B cell (primary cell): ENCODE measurements at regions of chr5 and their contacts with region 1.

Region 1: DNA sequence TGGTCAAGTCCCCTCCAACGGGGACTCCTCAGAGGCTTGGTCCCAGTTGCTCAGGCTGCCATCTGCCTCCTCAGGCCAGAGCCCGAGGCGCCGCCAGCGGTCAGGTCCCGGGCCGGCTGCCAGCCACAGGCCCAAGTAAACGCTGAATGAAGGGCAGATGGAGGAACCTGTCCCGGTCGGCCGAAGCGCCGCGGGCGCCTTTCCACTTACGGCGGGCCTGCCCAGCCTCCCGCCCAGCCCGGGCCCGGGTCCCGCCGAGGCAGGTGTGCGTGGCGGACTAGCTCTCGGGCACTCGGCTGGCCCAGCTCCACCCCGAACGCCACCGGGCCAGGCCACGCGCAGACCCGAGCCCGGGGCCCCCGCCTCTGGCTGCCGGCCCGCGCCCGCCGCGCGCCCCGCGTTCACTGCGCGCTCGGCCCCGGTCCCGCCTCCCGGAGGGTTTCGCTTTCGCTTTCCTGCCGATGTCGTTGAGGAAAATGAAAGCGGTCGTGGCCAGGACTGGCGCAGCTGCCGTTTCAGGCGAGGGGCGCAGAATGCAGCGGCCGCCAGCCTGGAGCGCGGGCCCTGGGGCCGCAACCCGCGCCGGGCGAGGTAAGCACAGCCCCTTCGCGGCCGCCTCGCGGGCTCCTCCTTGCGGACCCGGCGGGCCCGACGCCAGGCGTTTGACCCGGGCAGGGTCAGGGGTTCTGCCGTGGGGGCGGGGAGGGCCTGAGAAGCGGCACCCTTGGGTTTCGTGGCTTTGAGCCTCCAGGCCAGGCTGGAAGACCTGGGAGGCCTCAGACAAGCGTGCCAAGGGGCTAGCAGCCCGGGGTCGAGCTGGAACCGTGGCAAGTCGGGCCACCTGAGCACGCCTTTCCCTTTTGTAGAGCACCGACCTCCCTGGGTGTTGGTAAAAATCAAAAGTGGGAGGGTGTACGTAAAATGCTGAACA is 41.2 kb downstream of the SLC22A5 start:
- DNase-seq: peak; percentile 94
- ATAC-seq: peak; percentile 81
- H3K4me3 ChIP-seq: peak overlapping the region; percentile 71 to 93 (median 78)
- H3K4me3 Mint-ChIP-seq: peak overlapping the region; percentile 98
- H3K27ac ChIP-seq: peak overlapping the region; percentile 96 to 97
- H3K27ac Mint-ChIP-seq: peak overlapping the region; percentile 99
- H3K4me1 ChIP-seq: peaks cover 61 to 63% of the 10 kb centered on the region in 2 donors
- H3K4me1 Mint-ChIP-seq: peaks cover 68% of the 10 kb centered on the region
- H3K27me3 ChIP-seq: no peaks in the 10 kb centered on the region
- H3K27me3 Mint-ChIP-seq: no peaks in the 10 kb centered on the region
- CTCF ChIP-seq: peak; percentile 77

Region 2: GRCh38 chr5:131983244-131983771 is 427.4 kb before region 1 on chr5:
- CTCF ChIA-PET with region 1: no interaction called
- POLR2A ChIA-PET with region 1: no interaction called
- intact Hi-C with region 1: no loop called
- DNase-seq: no peak
- ATAC-seq: no peak
- H3K4me3 ChIP-seq: no peak overlapping the region
- H3K4me3 Mint-ChIP-seq: no peak overlapping the region
- H3K27ac ChIP-seq: no peak overlapping the region
- H3K27ac Mint-ChIP-seq: no peak overlapping the region
- H3K4me1 ChIP-seq: no peaks in the 10 kb centered on the region
- H3K4me1 Mint-ChIP-seq: no peaks in the 10 kb centered on the region
- H3K27me3 ChIP-seq: no peaks in the 10 kb centered on the region
- H3K27me3 Mint-ChIP-seq: peaks cover 8% of the 10 kb centered on the region
- CTCF ChIP-seq: no peak

Region 3: GRCh38 chr5:132426525-132427138 is 15.9 kb after region 1 on chr5:
- CTCF ChIA-PET with region 1: interaction called, 21 read pairs
- POLR2A ChIA-PET with region 1: interaction called, 8 read pairs
- intact Hi-C with region 1: loop called (anchors 2 kb)
- DNase-seq: peak; percentile 64
- ATAC-seq: peak; percentile 41
- H3K4me3 ChIP-seq: peak overlapping the region in 2 of 5 experiments; percentile 8 to 56
- H3K4me3 Mint-ChIP-seq: peak overlapping the region; percentile 80
- H3K27ac ChIP-seq: peak overlapping the region; percentile 90 to 94
- H3K27ac Mint-ChIP-seq: peak overlapping the region; percentile 93
- H3K4me1 ChIP-seq: peaks cover 99 to 100% of the 10 kb centered on the region in 2 donors
- H3K4me1 Mint-ChIP-seq: peaks cover 97% of the 10 kb centered on the region
- H3K27me3 ChIP-seq: no peaks in the 10 kb centered on the region
- H3K27me3 Mint-ChIP-seq: no peaks in the 10 kb centered on the region
- CTCF ChIP-seq: no peak

Region 4: GRCh38 chr5:132473019-132473531 is 62.4 kb after region 1 on chr5:
- CTCF ChIA-PET with region 1: interaction called, 22 read pairs
- POLR2A ChIA-PET with region 1: interaction called, 25 read pairs
- intact Hi-C with region 1: no loop called
- DNase-seq: peak; percentile 88
- ATAC-seq: peak; percentile 86
- H3K4me3 ChIP-seq: no peak overlapping the region
- H3K4me3 Mint-ChIP-seq: peak overlapping the region; percentile 83
- H3K27ac ChIP-seq: peak overlapping the region; percentile 81 to 93
- H3K27ac Mint-ChIP-seq: peak overlapping the region; percentile 99
- H3K4me1 ChIP-seq: peaks cover 46 to 75% of the 10 kb centered on the region in 2 donors
- H3K4me1 Mint-ChIP-seq: peaks cover 78% of the 10 kb centered on the region
- H3K27me3 ChIP-seq: no peaks in the 10 kb centered on the region
- H3K27me3 Mint-ChIP-seq: no peaks in the 10 kb centered on the region
- CTCF ChIP-seq: no peak

Region 5: DNA sequence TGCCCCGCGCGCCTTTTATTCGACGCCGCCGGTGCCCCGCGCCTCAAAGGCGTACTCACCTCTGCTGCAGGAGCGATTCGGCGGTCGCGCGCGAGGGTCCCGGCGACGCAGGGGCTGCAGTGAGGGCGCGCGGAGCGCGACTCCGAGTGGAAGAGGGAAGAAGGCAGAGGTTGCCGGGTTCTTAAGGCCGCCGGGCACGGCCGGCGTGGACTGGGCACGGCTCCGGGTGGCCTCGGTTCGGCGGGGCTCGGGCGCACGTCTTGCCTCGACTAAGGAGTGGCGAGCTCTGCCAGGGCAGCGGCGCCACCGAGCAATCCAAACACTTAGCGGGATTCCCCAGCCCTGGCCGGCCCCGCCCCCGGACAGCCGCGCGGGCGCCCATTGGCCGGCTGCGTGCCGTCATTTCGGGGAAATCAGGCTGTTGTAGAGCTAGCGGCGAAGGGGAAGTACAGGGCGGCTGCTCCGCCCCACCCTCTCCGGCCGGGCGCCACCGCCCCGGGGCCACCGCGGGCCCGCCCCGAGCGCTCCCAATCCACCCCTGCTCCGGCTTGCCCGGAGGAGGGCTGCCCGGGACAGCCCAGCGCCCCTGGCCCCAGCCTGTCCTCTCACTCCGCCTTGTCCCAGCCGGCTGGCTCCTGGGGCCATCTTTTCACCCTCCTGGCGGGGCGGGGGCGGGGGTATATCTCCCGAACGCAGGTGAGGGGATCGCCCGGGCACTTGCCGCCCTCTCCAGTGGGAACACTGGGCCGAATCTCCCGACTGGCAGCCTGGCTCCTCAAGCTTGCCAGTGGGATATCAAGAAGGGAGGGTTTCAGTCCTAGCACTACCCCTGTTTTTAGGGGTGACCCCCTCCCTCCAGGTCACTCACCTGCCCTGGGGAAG is 80.0 kb after region 1 on chr5 and contains the start of gene IRF1:
- CTCF ChIA-PET with region 1: interaction called, 66 read pairs
- POLR2A ChIA-PET with region 1: interaction called, 57 read pairs
- intact Hi-C with region 1: loop called (anchors 1 kb)
- DNase-seq: peak; percentile 98
- ATAC-seq: peak; percentile 70
- H3K4me3 ChIP-seq: peak within 1 kb of the TSS; percentile 81 to 99 (median 89)
- H3K4me3 Mint-ChIP-seq: peak within 1 kb of the TSS; percentile 96
- H3K27ac ChIP-seq: peak within 1 kb of the TSS; percentile 99
- H3K27ac Mint-ChIP-seq: peak within 1 kb of the TSS; percentile 96
- H3K4me1 ChIP-seq: peaks cover 74 to 81% of the 10 kb centered on the region in 2 donors
- H3K4me1 Mint-ChIP-seq: peaks cover 76% of the 10 kb centered on the region
- H3K27me3 ChIP-seq: no peaks in the 10 kb centered on the region
- H3K27me3 Mint-ChIP-seq: no peaks in the 10 kb centered on the region
- CTCF ChIP-seq: no peak
- total RNA-seq, gene IRF1: 304 and 306 TPM in 2 replicates

Region 6: DNA sequence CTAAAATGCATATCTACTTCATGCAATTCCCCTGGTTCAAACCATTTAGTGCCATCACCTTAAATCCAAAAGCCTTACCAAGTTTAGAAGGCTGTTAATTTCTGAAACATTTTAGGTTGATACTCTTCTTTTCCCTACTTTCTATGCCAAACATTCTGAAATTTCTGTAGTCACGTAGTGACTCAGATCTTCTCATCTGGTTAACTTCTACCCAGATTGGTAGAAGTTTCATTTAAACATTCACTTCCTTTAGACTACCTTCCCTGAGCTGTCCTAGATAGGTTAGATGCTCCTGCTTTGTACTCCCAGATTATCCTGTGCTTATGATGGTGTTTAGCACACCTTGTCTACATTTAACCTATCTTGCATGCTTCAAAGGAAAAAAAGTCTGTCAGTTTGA is 155.9 kb after region 1 on chr5:
- CTCF ChIA-PET with region 1: no interaction called
- POLR2A ChIA-PET with region 1: no interaction called
- intact Hi-C with region 1: no loop called
- DNase-seq: no peak
- ATAC-seq: no peak
- H3K4me3 ChIP-seq: no peak overlapping the region
- H3K4me3 Mint-ChIP-seq: no peak overlapping the region
- H3K27ac ChIP-seq: no peak overlapping the region
- H3K27ac Mint-ChIP-seq: no peak overlapping the region
- H3K4me1 ChIP-seq: no peaks in the 10 kb centered on the region
- H3K4me1 Mint-ChIP-seq: no peaks in the 10 kb centered on the region
- H3K27me3 ChIP-seq: no peaks in the 10 kb centered on the region
- H3K27me3 Mint-ChIP-seq: no peaks in the 10 kb centered on the region
- CTCF ChIP-seq: no peak

Region 7: GRCh38 chr5:132736853-132737833 is 326.4 kb after region 1 on chr5 and contains the start of gene KIF3A:
- CTCF ChIA-PET with region 1: no interaction called
- POLR2A ChIA-PET with region 1: no interaction called
- intact Hi-C with region 1: loop called (anchors 1 kb)
- DNase-seq: peak; percentile 98
- ATAC-seq: peak; percentile 90
- H3K4me3 ChIP-seq: peak within 1 kb of the TSS; percentile 57 to 80 (median 74)
- H3K4me3 Mint-ChIP-seq: peak within 1 kb of the TSS; percentile 89
- H3K27ac ChIP-seq: peak within 1 kb of the TSS; percentile 34 to 58
- H3K27ac Mint-ChIP-seq: peak within 1 kb of the TSS; percentile 96
- H3K4me1 ChIP-seq: peaks cover 11 to 13% of the 10 kb centered on the region in 2 donors
- H3K4me1 Mint-ChIP-seq: peaks cover 22% of the 10 kb centered on the region
- H3K27me3 ChIP-seq: peaks cover 0 to 3% (median 2%) of the 10 kb centered on the region in 4 experiments
- H3K27me3 Mint-ChIP-seq: peaks cover 10% of the 10 kb centered on the region
- CTCF ChIP-seq: peak; percentile 9
- total RNA-seq, gene KIF3A: 13.6 and 16.0 TPM in 2 replicates